ENCODE measurements at regions of chr1 and their contacts with region 1.

Region 1: DNA sequence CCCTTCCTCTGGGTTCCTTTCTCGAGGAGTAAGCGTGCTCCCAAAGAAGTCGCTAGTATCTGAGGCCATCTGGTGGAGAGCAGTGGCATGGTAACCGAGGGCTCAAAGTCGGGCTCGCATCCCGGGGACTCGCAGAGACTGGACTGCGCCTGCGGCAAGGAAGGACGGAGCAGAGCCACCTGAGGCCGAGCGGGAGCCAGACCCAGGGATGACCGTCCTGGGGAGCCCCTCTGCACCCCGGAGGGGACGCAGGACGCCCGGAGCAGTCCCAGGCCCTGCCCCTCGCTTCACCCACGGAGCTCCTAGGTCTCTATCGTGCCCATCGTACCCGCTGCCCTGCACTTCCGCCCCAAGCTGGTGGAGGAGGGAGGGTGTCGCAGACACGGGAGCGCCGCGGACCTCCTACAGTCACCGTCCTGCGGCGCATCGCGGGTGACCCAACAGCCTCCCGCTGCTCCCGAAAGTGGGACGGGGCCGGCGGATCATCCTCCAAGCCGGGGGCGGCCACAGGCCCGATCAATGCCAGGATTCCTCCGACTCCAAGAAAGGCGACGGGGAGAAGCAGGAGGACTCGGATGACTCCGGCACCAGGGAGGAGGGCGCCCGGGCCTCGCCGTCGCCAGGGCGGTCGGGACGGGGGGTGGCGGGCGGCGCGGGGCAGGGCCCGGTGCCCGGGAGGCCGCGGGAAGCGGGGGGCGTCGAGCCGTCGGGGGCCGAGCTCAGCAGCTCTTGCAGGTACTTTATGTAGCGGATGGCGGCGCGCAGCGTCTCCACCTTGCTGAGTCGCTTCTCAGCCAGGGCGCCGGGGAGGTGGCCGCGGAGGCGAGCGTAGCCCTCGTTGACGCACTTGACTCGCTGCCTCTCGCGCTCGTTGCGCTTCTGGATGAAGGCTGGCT is 2.3 kb upstream of the CACNA1S start:
- DNase-seq: peak; percentile 82
- ATAC-seq: peak; percentile 92
- H3K4me3 Mint-ChIP-seq: peak overlapping the region; percentile 71
- H3K27ac Mint-ChIP-seq: no peak overlapping the region
- H3K4me1 Mint-ChIP-seq: peaks cover 5% of the 10 kb centered on the region
- H3K27me3 Mint-ChIP-seq: peaks cover 46% of the 10 kb centered on the region

Region 2: GRCh38 chr1:201023517-201023902 is 91.0 kb before region 1 on chr1 and contains the start of gene KIF21B:
- CTCF ChIA-PET with region 1: interaction called, 13 read pairs
- DNase-seq: peak; percentile 93
- ATAC-seq: peak; percentile 78
- H3K4me3 Mint-ChIP-seq: peak within 1 kb of the TSS; percentile 91
- H3K27ac Mint-ChIP-seq: peak within 1 kb of the TSS; percentile 99
- H3K4me1 Mint-ChIP-seq: peaks cover 72% of the 10 kb centered on the region
- H3K27me3 Mint-ChIP-seq: no peaks in the 10 kb centered on the region
- total RNA-seq, gene KIF21B: 102 to 155 TPM

Measured in activated CD8-positive, alpha-beta memory T cell treated with anti-CD3 and anti-CD28 coated beads, Interleukin-2, amount 10 ng/mL, durations not matched to agents 7 days and 5 days (primary cell).